ENCODE measurements at regions of chr11 and their contacts with region 1.

Region 1: GRCh38 chr11:27485930-27486773 is 13.6 kb upstream of the LGR4 start:
- DNase-seq: no peak
- H3K4me3 Mint-ChIP-seq: no peak overlapping the region
- H3K27ac Mint-ChIP-seq: no peak overlapping the region
- H3K4me1 Mint-ChIP-seq: no peaks in the 10 kb centered on the region
- H3K27me3 Mint-ChIP-seq: no peaks in the 10 kb centered on the region

Region 2: DNA sequence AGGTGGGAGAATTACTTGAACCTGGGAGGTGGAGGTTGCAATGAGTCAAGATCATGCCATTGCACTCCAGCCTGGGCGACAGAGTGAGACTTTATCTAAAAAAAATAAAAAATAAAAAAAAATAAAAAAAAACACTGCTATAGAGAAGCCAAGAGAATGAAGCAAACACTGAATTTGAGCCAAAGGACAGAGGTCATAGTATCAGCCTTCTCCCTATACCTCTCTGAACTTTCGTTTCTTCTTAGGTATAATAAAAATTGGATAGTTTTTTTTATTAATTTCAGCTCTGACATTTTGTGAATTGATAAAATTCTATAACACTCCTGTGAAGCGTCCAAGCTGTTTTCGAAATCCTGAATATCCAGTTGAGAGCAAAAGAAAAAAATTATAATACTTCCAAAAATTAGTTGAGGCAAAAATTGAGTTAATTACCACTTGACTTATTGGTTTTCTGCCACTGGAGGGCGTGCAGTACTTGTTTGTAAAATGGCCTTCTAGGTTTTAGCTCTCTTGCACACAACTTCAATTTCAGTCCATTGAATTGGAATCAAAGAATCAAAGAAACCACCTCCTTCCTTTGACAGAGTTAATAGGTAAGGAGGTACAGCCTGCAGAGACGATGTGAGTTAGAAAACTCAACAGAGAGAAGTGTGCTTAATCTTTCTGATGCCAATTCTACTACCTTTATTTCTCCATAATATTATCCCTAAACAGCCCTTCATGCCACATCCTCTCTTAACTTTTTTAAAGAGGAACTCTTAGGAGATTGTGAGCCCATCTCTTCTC is 302.3 kb before region 1 on chr11:
- CTCF ChIA-PET with region 1: interaction called, 22 read pairs
- POLR2A ChIA-PET with region 1: interaction called, 3 read pairs
- DNase-seq: peak; percentile 31
- H3K4me3 Mint-ChIP-seq: no peak overlapping the region
- H3K27ac Mint-ChIP-seq: no peak overlapping the region
- H3K4me1 Mint-ChIP-seq: no peaks in the 10 kb centered on the region
- H3K27me3 Mint-ChIP-seq: peaks cover 14% of the 10 kb centered on the region

Region 3: DNA sequence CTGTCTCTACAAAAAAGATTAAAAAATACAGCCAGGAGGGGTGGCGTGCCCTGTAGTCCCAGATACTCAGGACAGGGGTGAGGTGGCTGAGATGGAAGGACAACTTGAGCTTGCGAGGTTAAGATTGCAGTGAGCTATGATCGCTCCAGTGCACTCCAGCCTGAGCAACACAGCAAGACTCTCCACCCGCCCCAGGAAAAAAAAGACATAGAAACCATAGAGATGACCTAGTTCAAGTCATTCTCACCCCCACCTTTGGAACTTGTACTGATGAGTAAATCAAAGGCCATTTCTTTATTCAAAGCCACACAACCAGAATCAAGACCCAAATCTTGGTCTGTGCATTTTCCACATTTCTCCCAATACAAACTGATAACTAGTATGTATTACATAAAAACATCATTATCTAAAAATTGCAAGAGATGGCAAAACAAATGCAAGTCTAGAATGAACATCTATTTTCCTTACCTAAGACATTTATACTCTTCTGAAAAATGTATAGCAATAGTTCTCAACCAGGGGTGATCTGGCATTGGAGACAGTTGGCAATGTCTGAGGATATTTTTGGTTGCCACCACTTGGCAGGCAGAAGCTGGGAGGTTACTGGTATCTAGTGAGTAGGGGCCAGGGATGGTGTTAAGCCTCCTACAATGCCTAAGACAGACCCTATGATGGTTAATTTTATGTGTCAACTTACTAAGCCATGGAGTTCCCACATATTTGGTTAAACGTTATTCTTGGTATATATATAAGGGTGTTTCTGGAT is 48.1 kb before region 1 on chr11:
- CTCF ChIA-PET with region 1: no interaction called
- POLR2A ChIA-PET with region 1: no interaction called
- DNase-seq: no peak
- H3K4me3 Mint-ChIP-seq: no peak overlapping the region
- H3K27ac Mint-ChIP-seq: no peak overlapping the region
- H3K4me1 Mint-ChIP-seq: no peaks in the 10 kb centered on the region
- H3K27me3 Mint-ChIP-seq: no peaks in the 10 kb centered on the region

Region 4: GRCh38 chr11:27475622-27476021 is 10.5 kb before region 1 on chr11:
- CTCF ChIA-PET with region 1: interaction called, 16 read pairs
- POLR2A ChIA-PET with region 1: no interaction called
- DNase-seq: no peak
- H3K4me3 Mint-ChIP-seq: no peak overlapping the region
- H3K27ac Mint-ChIP-seq: no peak overlapping the region
- H3K4me1 Mint-ChIP-seq: peaks cover 6% of the 10 kb centered on the region
- H3K27me3 Mint-ChIP-seq: peaks cover 27% of the 10 kb centered on the region

Region 5: DNA sequence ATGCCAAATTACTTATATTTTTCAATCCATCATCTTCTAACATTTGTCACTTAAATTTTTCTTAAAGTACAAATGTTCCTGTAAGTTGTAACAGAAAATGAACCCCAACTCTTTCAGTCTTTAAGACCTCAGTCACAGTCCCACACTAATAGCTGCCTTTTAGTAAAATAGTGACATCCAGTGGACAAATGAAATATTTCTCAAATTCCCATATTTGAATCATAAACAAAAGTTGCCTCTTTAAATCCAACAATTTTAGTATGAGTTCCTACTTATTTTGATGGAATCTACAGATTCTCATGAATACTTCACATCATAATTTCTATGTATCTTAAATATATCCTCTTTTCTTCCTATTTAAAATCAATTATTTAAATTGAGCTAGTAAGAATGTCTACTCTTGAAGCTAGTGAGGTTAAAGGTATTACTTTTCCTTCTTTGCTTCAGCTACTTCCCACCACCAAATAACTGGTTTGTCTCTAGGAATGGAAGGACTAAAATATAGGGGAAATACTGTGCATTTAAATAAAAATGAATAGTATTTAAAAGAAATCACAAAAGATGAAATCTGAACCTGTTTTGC is 11.2 kb after region 1 on chr11:
- CTCF ChIA-PET with region 1: interaction called, 75 read pairs
- POLR2A ChIA-PET with region 1: no interaction called
- DNase-seq: no peak
- H3K4me3 Mint-ChIP-seq: no peak overlapping the region
- H3K27ac Mint-ChIP-seq: no peak overlapping the region
- H3K4me1 Mint-ChIP-seq: peaks cover 11% of the 10 kb centered on the region
- H3K27me3 Mint-ChIP-seq: no peaks in the 10 kb centered on the region

Measured in activated CD4-positive, alpha-beta memory T cell treated with anti-CD3 and anti-CD28 coated beads, Interleukin-2, amount 10 ng/mL, durations not matched to agents 7 days and 5 days (primary cell).